ENCODE measurements at regions of chr5 and their contacts with region 1.

Region 1: DNA sequence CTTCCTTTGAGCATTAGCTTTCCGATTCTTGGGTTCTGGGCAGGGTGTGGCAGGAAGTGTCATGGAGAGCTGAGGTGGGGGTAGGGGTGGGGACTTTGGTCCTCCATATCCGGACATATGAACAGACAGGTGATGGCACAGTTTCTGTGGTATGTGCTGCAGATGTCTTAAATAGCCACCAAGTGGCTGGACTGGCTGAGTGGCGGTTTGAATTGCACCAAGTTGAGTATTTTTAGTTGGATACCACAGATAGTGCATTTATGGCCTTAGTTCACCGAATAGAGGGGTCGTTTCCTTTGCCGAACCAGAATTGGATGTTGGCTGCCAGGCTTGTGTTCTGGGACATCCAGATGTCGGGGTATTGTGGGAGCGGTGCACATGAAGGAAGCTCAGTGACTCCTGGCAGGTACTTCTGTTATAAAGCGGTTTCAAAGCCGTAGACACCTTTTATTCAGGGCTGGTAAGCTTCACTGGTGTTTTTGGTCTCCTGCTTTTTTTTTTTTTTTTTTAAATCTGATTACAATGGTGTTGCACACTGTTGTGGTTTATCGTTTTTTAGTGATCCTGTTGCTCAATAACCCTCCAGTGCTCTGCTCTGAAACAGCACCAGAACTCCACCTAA is 15.1 kb upstream of the TNFAIP8 start:
- DNase-seq: peak; percentile 25 to 52 (median 47)
- H3K4me3 ChIP-seq: peak overlapping the region in 2 of 3 experiments; percentile 31 to 67
- H3K4me3 Mint-ChIP-seq: peak overlapping the region; percentile 69 to 85
- H3K27ac ChIP-seq: peak overlapping the region; percentile 52 to 88
- H3K27ac Mint-ChIP-seq: peak overlapping the region; percentile 79 to 97 (median 92)
- H3K4me1 ChIP-seq: peaks cover 96 to 99% of the 10 kb centered on the region in 2 donors
- H3K4me1 Mint-ChIP-seq: peaks cover 95% of the 10 kb centered on the region
- H3K27me3 ChIP-seq: no peaks in the 10 kb centered on the region
- H3K27me3 Mint-ChIP-seq: no peaks in the 10 kb centered on the region
- CTCF ChIP-seq: no peak

Region 2: DNA sequence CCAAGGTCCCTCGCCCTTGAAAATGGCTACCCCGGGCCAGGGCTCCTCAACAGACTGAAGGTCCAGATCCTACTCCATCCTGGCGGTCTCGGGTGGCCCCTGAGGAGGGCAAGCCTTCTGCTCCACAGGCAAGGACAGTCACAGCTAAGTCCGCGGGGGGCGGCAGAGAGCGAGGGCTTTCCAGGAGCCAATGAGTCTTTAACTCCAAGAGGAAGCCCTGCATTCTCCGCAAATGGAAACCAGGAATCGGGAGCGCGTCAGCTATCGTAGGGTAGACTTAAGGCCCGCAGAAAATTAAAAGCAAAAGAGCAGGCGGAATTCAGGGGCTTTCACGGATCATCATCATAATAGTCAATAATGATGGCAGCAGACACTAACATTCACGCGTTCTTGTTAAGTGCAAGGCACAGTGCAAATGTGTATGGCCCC is 72.7 kb before region 1 on chr5:
- intact Hi-C with region 1: loop called (anchors 5 kb)
- DNase-seq: peak; percentile 92 to 95 (median 94)
- H3K4me3 ChIP-seq: peak overlapping the region; percentile 98 to 99 (median 99)
- H3K4me3 Mint-ChIP-seq: peak overlapping the region; percentile 98 to 100
- H3K27ac ChIP-seq: peak overlapping the region; percentile 72 to 96
- H3K27ac Mint-ChIP-seq: peak overlapping the region; percentile 84 to 96 (median 92)
- H3K4me1 ChIP-seq: peaks cover 42 to 46% of the 10 kb centered on the region in 2 donors
- H3K4me1 Mint-ChIP-seq: peaks cover 47% of the 10 kb centered on the region
- H3K27me3 ChIP-seq: no peaks in the 10 kb centered on the region
- H3K27me3 Mint-ChIP-seq: peaks cover 0 to 2% (median 0%) of the 10 kb centered on the region in 3 donors
- CTCF ChIP-seq: peak; percentile 94

Region 3: GRCh38 chr5:119397518-119398380 is 57.0 kb after region 1 on chr5:
- intact Hi-C with region 1: no loop called
- DNase-seq: peak; percentile 59 to 93 (median 80)
- H3K4me3 ChIP-seq: peak overlapping the region; percentile 16 to 68 (median 64)
- H3K4me3 Mint-ChIP-seq: peak overlapping the region; percentile 66 to 87
- H3K27ac ChIP-seq: peak overlapping the region in 1 of 2 donors; percentile 81
- H3K27ac Mint-ChIP-seq: peak overlapping the region; percentile 46 to 86 (median 78)
- H3K4me1 ChIP-seq: peaks cover 18 to 28% of the 10 kb centered on the region in 2 donors
- H3K4me1 Mint-ChIP-seq: peaks cover 46% of the 10 kb centered on the region
- H3K27me3 ChIP-seq: no peaks in the 10 kb centered on the region
- H3K27me3 Mint-ChIP-seq: peaks cover 0 to 3% (median 0%) of the 10 kb centered on the region in 3 donors
- CTCF ChIP-seq: no peak

Measured in CD14-positive monocyte (primary cell).